ENCODE measurements at regions of chr2 and their contacts with region 1.

Region 1: GRCh38 chr2:110657724-110658305 is 20.0 kb downstream of the BUB1 start:
- DNase-seq: peak; percentile 25
- H3K4me3 Mint-ChIP-seq: no peak overlapping the region
- H3K27ac Mint-ChIP-seq: no peak overlapping the region
- H3K4me1 Mint-ChIP-seq: peaks cover 10% of the 10 kb centered on the region
- H3K27me3 Mint-ChIP-seq: no peaks in the 10 kb centered on the region

Region 2: DNA sequence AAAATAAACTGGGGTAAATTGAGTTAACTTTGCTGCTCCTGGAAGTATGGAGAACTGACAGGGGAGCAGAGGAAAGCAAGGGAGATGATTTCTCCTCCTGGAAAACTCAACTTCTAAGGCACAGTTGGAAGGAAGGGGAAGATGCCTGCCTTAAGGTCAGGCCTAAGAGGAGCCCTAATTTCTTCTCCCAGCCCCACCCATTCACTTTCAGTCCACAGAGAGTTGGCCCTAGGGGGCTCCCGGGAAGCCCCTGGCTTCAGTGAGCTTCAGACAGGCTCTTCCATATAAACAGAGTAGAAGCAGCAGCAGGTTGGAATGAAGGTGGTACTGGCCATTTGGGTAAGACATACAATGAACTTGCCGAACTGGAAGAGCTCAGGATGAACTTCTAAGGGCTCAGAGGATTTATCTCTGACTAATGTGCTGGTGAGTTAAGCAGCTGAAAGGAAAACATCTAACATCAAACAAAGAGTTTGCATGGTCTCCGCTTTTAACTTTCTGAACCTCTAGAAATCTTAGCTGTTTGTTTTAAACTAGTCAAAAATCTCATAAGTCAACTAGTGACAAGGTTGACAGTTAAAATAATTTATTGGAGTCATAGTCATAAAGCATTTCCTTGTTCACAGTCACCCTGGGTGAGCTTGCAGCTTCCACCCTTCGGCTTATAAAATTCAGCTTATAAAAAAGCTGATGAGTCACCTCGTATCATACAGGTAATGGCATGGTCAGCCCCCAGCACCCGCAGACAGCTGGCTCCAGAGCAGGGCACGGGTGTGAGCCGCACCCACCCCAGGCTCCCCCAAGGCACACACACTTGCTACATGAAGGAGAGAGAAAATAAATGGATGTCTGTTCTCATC is 552.0 kb before region 1 on chr2:
- CTCF ChIA-PET with region 1: no interaction called
- POLR2A ChIA-PET with region 1: no interaction called
- intact Hi-C with region 1: no loop called
- DNase-seq: peak; percentile 27
- H3K4me3 Mint-ChIP-seq: no peak overlapping the region
- H3K27ac Mint-ChIP-seq: no peak overlapping the region
- H3K4me1 Mint-ChIP-seq: peaks cover 4% of the 10 kb centered on the region
- H3K27me3 Mint-ChIP-seq: peaks cover 48% of the 10 kb centered on the region

Region 3: GRCh38 chr2:110677530-110678456 is 20.0 kb after region 1 on chr2 and contains the start of gene BUB1:
- CTCF ChIA-PET with region 1: no interaction called
- POLR2A ChIA-PET with region 1: interaction called, 4 read pairs
- intact Hi-C with region 1: loop called (anchors 1 kb)
- DNase-seq: peak; percentile 97
- H3K4me3 Mint-ChIP-seq: peak within 1 kb of the TSS; percentile 94
- H3K27ac Mint-ChIP-seq: peak within 1 kb of the TSS; percentile 96
- H3K4me1 Mint-ChIP-seq: peaks cover 21% of the 10 kb centered on the region
- H3K27me3 Mint-ChIP-seq: no peaks in the 10 kb centered on the region
- total RNA-seq, gene BUB1: 90.8 to 102 TPM